ENCODE measurements at regions of chr12 and their contacts with region 1.

Region 1: DNA sequence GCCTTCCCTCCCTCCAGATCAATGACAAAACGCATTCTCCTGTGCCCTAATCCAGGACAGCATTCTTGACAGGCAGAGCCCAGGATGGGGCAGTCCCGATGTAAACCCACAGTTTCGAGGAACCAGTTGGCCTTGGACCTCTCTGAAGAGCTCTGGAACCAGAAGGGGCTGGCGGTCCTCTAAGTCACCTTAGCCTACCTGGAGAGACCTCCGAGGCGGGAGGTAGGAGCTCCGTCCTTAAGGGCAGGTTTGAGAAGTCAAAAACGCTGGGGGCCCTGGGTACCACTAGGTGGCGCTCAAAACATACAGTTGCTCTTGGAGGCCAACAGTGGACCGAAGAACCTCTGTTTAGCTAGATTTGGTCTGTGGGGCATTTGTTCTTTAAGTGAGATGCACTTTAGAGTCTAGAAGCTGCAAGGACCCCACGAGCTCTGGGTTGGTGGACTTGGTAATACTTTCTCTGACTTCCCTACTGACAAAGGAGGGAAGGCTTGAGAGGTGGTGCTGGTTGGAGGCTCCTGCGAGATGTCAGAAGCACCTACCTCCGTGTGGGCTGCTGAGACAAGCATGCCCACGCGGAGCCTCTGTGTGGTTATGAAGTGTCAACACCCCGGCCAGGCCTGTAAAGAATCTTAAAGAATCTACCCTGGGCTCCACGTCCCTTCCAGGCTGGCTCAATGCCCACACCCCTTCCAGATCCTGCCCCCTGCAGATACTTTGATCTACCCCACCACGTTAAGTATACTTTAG is 74.8 kb upstream of the CHST11 start:
- DNase-seq: peak; percentile 80
- ATAC-seq: peak; percentile 89 to 94
- H3K4me3 ChIP-seq: no peak overlapping the region
- H3K27ac ChIP-seq: no peak overlapping the region
- H3K4me1 ChIP-seq: peaks cover 11% of the 10 kb centered on the region
- H3K27me3 ChIP-seq: no peaks in the 10 kb centered on the region
- CTCF ChIP-seq: peak; percentile 98

Region 2: DNA sequence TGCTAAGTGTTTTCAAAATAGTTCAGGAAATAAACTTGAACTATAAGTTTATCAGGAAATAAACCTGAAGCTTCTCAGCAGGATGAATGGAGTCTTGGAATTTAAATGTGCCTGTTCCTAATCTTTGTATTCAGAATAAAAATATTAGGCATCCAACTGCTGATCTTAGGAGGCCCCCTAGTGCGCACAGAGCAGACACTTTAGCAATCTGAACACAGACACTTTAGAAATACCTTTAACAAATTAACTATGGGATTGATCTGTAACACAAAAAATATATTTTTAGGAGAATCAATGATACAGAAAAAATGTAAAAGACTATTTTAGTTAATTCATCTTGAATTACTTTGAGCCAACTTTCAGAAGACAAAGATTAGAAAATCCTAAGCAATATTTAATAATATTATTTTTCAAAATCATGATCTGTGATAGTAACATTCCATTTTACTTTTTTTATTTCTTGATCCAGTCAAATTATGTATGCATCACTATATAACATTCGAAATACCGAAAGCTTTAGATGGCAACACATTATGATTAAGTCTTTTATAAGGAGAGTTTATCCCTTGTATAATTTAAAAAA is 495.3 kb after region 1 on chr12:
- intact Hi-C with region 1: loop called (anchors 5 kb)
- DNase-seq: no peak
- ATAC-seq: peak in 1 of 2 donors; percentile 62
- H3K4me3 ChIP-seq: no peak overlapping the region
- H3K27ac ChIP-seq: no peak overlapping the region
- H3K4me1 ChIP-seq: no peaks in the 10 kb centered on the region
- H3K27me3 ChIP-seq: no peaks in the 10 kb centered on the region
- CTCF ChIP-seq: peak; percentile 59

Region 3: GRCh38 chr12:105053116-105053572 is 671.2 kb after region 1 on chr12:
- intact Hi-C with region 1: loop called (anchors 5 kb)
- DNase-seq: peak; percentile 66
- ATAC-seq: peak; percentile 87
- H3K4me3 ChIP-seq: no peak overlapping the region
- H3K27ac ChIP-seq: no peak overlapping the region
- H3K4me1 ChIP-seq: peaks cover 4% of the 10 kb centered on the region
- H3K27me3 ChIP-seq: no peaks in the 10 kb centered on the region
- CTCF ChIP-seq: peak; percentile 94

Measured in lower lobe of right lung (tissue), 2 donors.